ENCODE measurements at regions of chr19 and their contacts with region 1.

Region 1: GRCh38 chr19:40190891-40191835 is at the start of gene MAP3K10:
- DNase-seq: peak; percentile 37 to 85 (median 68)
- ATAC-seq: peak; percentile 81
- H3K4me3 ChIP-seq: peak within 1 kb of the TSS; percentile 98
- H3K4me3 Mint-ChIP-seq: peak within 1 kb of the TSS; percentile 95
- H3K27ac ChIP-seq: peak within 1 kb of the TSS; percentile 83 to 89
- H3K27ac Mint-ChIP-seq: peak within 1 kb of the TSS; percentile 88
- H3K4me1 ChIP-seq: peaks cover 31% of the 10 kb centered on the region
- H3K4me1 Mint-ChIP-seq: peaks cover 45% of the 10 kb centered on the region
- H3K27me3 ChIP-seq: no peaks in the 10 kb centered on the region
- H3K27me3 Mint-ChIP-seq: no peaks in the 10 kb centered on the region
- CTCF ChIP-seq: no peak
- total RNA-seq, gene MAP3K10: 20.8 to 21.7 TPM

Region 2: GRCh38 chr19:39824143-39825092 is 366.7 kb before region 1 on chr19:
- CTCF ChIA-PET with region 1: no interaction called
- POLR2A ChIA-PET with region 1: no interaction called
- intact Hi-C with region 1: loop called in 1 of 2 experiments (anchors 5 kb)
- DNase-seq: peak; percentile 75 to 94 (median 82)
- ATAC-seq: peak; percentile 99
- H3K4me3 ChIP-seq: peak overlapping the region; percentile 94
- H3K4me3 Mint-ChIP-seq: no peak overlapping the region
- H3K27ac ChIP-seq: peak overlapping the region; percentile 29 to 55
- H3K27ac Mint-ChIP-seq: no peak overlapping the region
- H3K4me1 ChIP-seq: peaks cover 40% of the 10 kb centered on the region
- H3K4me1 Mint-ChIP-seq: no peaks in the 10 kb centered on the region
- H3K27me3 ChIP-seq: no peaks in the 10 kb centered on the region
- H3K27me3 Mint-ChIP-seq: no peaks in the 10 kb centered on the region
- CTCF ChIP-seq: no peak

Region 3: DNA sequence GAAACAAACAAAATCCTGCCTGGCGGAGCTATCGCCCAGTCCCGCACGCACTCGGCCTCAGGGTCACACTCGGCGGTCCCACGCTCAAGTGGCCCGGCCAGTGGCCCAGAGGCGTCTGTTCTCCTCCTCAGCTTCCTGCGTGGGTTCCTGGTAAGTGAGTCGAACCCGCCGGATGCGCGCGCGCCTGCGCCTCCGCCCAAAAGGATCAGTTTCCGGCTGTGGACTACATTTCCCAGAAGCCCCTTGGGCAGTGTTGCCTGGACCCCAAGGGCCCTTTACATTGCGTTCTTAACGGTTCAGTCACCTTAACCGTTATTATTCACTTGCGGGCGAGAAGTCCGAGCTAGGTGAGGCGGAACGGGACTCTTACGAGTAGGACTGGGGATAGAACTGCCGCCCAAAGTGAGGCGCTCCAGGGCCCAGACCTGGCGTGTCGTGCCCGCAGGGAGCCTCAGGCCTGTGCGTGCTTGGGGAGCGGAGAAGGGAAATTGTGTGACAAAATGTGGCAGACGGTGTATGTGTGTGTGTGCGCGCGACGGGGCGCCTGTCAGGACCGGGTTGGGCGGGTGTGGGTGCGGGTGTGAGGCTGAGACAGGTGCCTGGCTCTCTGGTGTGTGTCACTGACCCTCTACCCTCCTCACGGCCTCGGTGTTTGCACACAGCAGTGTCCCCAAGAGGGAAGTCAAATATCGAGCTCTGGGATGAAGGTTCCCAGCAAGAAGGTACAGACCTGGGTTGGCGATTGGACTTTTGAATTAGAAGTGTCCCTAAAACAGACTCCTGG is 194.2 kb before region 1 on chr19 and contains the start of gene ZNF546:
- CTCF ChIA-PET with region 1: no interaction called
- POLR2A ChIA-PET with region 1: no interaction called
- intact Hi-C with region 1: loop called in 1 of 2 experiments (anchors 10 kb)
- DNase-seq: peak; percentile 81 to 96 (median 86)
- ATAC-seq: peak; percentile 92
- H3K4me3 ChIP-seq: peak within 1 kb of the TSS; percentile 71
- H3K4me3 Mint-ChIP-seq: peak within 1 kb of the TSS; percentile 96
- H3K27ac ChIP-seq: peak within 1 kb of the TSS; percentile 84 to 85
- H3K27ac Mint-ChIP-seq: peak within 1 kb of the TSS; percentile 84
- H3K4me1 ChIP-seq: peaks cover 24% of the 10 kb centered on the region
- H3K4me1 Mint-ChIP-seq: peaks cover 52% of the 10 kb centered on the region
- H3K27me3 ChIP-seq: no peaks in the 10 kb centered on the region
- H3K27me3 Mint-ChIP-seq: no peaks in the 10 kb centered on the region
- CTCF ChIP-seq: no peak
- total RNA-seq, gene ZNF546: 2.4 to 3.8 TPM

Region 4: GRCh38 chr19:40090241-40091204 is 100.6 kb before region 1 on chr19 and contains the start of gene ZNF780A:
- CTCF ChIA-PET with region 1: no interaction called
- POLR2A ChIA-PET with region 1: interaction called, 3 read pairs
- intact Hi-C with region 1: loop called in 1 of 2 experiments (anchors 5 kb)
- DNase-seq: peak; percentile 61 to 86 (median 72)
- ATAC-seq: peak; percentile 96
- H3K4me3 ChIP-seq: peak within 1 kb of the TSS; percentile 81
- H3K4me3 Mint-ChIP-seq: peak within 1 kb of the TSS; percentile 100
- H3K27ac ChIP-seq: peak within 1 kb of the TSS; percentile 89 to 91
- H3K27ac Mint-ChIP-seq: peak within 1 kb of the TSS; percentile 99
- H3K4me1 ChIP-seq: peaks cover 6% of the 10 kb centered on the region
- H3K4me1 Mint-ChIP-seq: peaks cover 47% of the 10 kb centered on the region
- H3K27me3 ChIP-seq: peaks cover 5 to 7% of the 10 kb centered on the region in 2 experiments
- H3K27me3 Mint-ChIP-seq: peaks cover 10% of the 10 kb centered on the region
- CTCF ChIP-seq: no peak
- total RNA-seq, gene ZNF780A: 9.7 to 10.6 TPM

Region 5: GRCh38 chr19:40128991-40129390 is 62.2 kb before region 1 on chr19:
- CTCF ChIA-PET with region 1: no interaction called
- POLR2A ChIA-PET with region 1: no interaction called
- intact Hi-C with region 1: no loop called
- DNase-seq: no peak
- ATAC-seq: no peak
- H3K4me3 ChIP-seq: no peak overlapping the region
- H3K4me3 Mint-ChIP-seq: no peak overlapping the region
- H3K27ac ChIP-seq: no peak overlapping the region
- H3K27ac Mint-ChIP-seq: no peak overlapping the region
- H3K4me1 ChIP-seq: no peaks in the 10 kb centered on the region
- H3K4me1 Mint-ChIP-seq: no peaks in the 10 kb centered on the region
- H3K27me3 ChIP-seq: peaks cover 0 to 4% of the 10 kb centered on the region in 2 experiments
- H3K27me3 Mint-ChIP-seq: peaks cover 61% of the 10 kb centered on the region
- CTCF ChIP-seq: no peak

Region 6: GRCh38 chr19:40221858-40222837 is 31.0 kb after region 1 on chr19:
- CTCF ChIA-PET with region 1: no interaction called
- POLR2A ChIA-PET with region 1: no interaction called
- intact Hi-C with region 1: loop called in 1 of 2 experiments (anchors 2 kb)
- DNase-seq: peak; percentile 54 to 91 (median 66)
- ATAC-seq: peak; percentile 89
- H3K4me3 ChIP-seq: no peak overlapping the region
- H3K4me3 Mint-ChIP-seq: peak overlapping the region; percentile 26
- H3K27ac ChIP-seq: no peak overlapping the region
- H3K27ac Mint-ChIP-seq: peak overlapping the region; percentile 2
- H3K4me1 ChIP-seq: peaks cover 44% of the 10 kb centered on the region
- H3K4me1 Mint-ChIP-seq: peaks cover 16% of the 10 kb centered on the region
- H3K27me3 ChIP-seq: peaks cover 56 to 58% of the 10 kb centered on the region in 2 experiments
- H3K27me3 Mint-ChIP-seq: peaks cover 68% of the 10 kb centered on the region
- CTCF ChIP-seq: peak; percentile 86

Region 7: DNA sequence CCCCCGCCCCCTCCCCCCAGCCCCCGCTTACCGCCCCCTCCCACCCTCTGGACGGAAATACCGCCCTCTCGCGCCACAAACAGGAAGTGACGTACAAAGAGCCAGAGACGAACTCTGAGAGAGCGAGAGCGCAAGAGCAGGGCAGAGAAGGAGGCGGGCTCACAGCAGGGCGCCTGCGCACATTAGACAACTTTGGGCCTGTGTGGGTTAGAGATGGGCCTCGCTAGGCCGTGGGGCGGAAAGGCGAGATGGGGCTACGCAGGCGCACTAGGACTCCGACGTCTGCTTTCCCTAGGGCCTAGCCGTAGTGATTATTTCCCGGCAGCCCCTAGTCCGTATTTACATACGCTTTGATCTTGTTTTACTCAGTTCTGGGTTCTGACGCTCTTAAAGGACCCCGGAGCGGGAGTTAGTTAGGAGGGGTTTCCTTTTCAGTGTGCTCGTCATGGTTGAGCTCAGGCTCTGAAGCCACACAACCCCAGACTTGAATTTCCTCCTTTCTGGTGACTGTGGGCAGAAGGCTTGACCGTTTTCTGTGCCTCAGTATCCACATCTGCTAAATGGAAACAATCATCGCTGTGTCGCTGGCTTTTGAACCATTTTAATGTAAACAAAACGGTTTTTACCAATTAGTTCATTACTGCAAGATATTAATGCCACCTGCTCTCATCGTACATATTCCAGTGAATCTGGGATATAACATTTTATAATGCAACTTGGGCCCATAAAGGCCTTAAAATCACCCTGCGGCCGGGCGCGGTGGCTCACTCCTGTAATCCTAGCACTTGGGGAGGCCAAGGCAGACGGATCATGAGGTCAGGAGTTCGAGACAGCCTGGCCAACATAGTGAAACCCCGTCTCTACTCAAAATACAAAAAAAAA is 94.4 kb after region 1 on chr19:
- CTCF ChIA-PET with region 1: no interaction called
- POLR2A ChIA-PET with region 1: interaction called, 3 read pairs
- intact Hi-C with region 1: loop called in 1 of 2 experiments (anchors 1 kb)
- DNase-seq: peak; percentile 94 to 100 (median 98)
- ATAC-seq: peak; percentile 75
- H3K4me3 ChIP-seq: peak overlapping the region; percentile 68
- H3K4me3 Mint-ChIP-seq: peak overlapping the region; percentile 89
- H3K27ac ChIP-seq: peak overlapping the region; percentile 78 to 90
- H3K27ac Mint-ChIP-seq: peak overlapping the region; percentile 93
- H3K4me1 ChIP-seq: peaks cover 52% of the 10 kb centered on the region
- H3K4me1 Mint-ChIP-seq: peaks cover 46% of the 10 kb centered on the region
- H3K27me3 ChIP-seq: no peaks in the 10 kb centered on the region
- H3K27me3 Mint-ChIP-seq: no peaks in the 10 kb centered on the region
- CTCF ChIP-seq: no peak

Region 8: DNA sequence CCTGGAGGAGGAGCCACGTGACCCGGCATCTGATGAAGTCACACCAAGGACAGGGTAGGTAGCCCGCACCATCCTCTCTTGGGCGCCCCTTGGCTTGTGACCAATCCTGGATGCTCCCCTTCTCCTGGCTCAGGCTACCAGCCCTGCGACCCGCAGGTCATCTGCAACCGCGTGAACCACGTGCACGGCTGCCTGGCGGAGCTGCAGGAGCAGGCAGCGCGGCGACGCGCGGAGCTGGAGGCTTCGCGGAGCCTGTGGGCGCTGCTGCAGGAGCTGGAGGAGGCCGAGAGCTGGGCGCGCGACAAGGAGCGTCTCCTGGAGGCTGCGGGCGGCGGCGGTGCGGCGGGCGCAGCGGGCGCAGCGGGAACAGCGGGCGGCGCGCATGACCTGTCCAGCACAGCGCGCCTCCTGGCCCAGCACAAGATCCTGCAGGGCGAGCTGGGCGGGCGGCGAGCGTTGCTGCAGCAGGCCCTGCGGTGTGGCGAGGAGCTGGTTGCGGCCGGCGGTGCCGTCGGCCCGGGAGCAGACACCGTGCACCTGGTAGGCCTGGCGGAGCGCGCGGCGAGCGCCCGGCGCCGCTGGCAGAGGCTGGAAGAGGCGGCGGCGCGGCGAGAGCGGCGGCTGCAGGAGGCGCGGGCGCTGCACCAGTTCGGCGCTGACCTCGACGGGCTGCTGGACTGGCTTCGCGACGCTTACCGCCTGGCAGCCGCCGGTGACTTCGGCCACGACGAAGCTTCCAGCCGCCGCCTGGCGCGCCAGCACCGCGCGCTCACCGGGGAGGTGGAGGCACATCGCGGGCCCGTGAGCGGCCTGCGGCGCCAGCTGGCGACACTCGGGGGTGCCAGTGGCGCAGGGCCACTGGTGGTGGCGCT is 321.5 kb after region 1 on chr19:
- CTCF ChIA-PET with region 1: no interaction called
- POLR2A ChIA-PET with region 1: no interaction called
- intact Hi-C with region 1: no loop called
- DNase-seq: peak in 2 of 14 experiments; percentile 20 to 22
- ATAC-seq: peak; percentile 34
- H3K4me3 ChIP-seq: no peak overlapping the region
- H3K4me3 Mint-ChIP-seq: no peak overlapping the region
- H3K27ac ChIP-seq: no peak overlapping the region
- H3K27ac Mint-ChIP-seq: no peak overlapping the region
- H3K4me1 ChIP-seq: peaks cover 4% of the 10 kb centered on the region
- H3K4me1 Mint-ChIP-seq: peaks cover 5% of the 10 kb centered on the region
- H3K27me3 ChIP-seq: peaks cover 34% of the 10 kb centered on the region in 2 experiments
- H3K27me3 Mint-ChIP-seq: peaks cover 64% of the 10 kb centered on the region
- CTCF ChIP-seq: no peak

Measured in CD4-positive, alpha-beta T cell (primary cell).